ENCODE measurements at regions of chr1 and their contacts with region 1.

Region 1: GRCh38 chr1:221203224-221204054 is 324.2 kb downstream of the HLX start:
- DNase-seq: peak; percentile 74
- H3K4me3 ChIP-seq: no peak overlapping the region
- H3K27ac ChIP-seq: peak overlapping the region in 3 of 4 donors; percentile 35 to 42 (median 39)
- H3K4me1 ChIP-seq: no peaks in the 10 kb centered on the region
- H3K27me3 ChIP-seq: no peaks in the 10 kb centered on the region
- CTCF ChIP-seq: peak; percentile 67 to 91 (median 82)
- EP300 ChIP-seq: no peak
- POLR2A ChIP-seq: no peak

Region 2: GRCh38 chr1:220908757-220909156 is 294.7 kb before region 1 on chr1:
- in situ Hi-C with region 1: loop called in 1 of 4 experiments (anchors 25 kb)
- intact Hi-C with region 1: no loop called
- DNase-seq: no peak
- H3K4me3 ChIP-seq: no peak overlapping the region
- H3K27ac ChIP-seq: no peak overlapping the region
- H3K4me1 ChIP-seq: no peaks in the 10 kb centered on the region
- H3K27me3 ChIP-seq: peaks cover 1% of the 10 kb centered on the region
- CTCF ChIP-seq: peak in 2 of 5 experiments; percentile 28 to 30
- EP300 ChIP-seq: no peak
- POLR2A ChIP-seq: no peak

Region 3: DNA sequence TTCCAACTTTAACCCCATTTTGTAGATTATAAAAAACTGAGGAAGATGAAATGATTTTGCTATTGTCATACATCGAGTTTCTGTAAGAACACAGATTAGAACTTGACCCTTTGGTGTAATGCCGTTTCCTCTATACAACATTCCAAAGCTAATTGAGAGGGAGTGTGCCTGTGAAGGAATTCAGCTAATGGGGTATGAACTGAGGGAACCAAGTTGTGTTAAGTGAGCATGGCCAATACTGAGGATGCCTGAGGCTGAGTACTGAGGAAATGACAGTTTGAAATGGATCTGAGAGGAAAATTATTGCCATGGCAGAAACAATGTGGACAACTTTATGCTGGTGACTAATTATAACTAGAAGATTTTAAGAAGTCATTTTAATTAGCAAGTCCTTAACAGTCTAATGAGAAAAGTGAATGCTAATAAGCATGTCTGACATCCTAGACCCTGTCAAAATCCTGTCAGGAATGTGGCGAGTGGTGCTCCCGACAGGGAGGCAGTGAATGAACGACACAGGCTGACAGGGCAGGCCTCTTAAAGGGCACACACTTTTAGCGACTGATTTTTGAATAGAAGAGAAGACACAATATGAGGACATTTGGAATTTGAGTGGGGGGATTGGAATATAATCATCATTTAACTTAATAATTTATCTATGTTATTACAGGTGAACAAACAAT is 61.7 kb before region 1 on chr1:
- in situ Hi-C with region 1: no loop called
- intact Hi-C with region 1: no loop called
- DNase-seq: no peak
- H3K4me3 ChIP-seq: no peak overlapping the region
- H3K27ac ChIP-seq: no peak overlapping the region
- H3K4me1 ChIP-seq: no peaks in the 10 kb centered on the region
- H3K27me3 ChIP-seq: no peaks in the 10 kb centered on the region
- CTCF ChIP-seq: no peak
- EP300 ChIP-seq: no peak
- POLR2A ChIP-seq: no peak

Region 4: GRCh38 chr1:221180704-221181368 is 22.6 kb before region 1 on chr1:
- in situ Hi-C with region 1: no loop called
- intact Hi-C with region 1: loop called (anchors 1 kb)
- DNase-seq: no peak
- H3K4me3 ChIP-seq: no peak overlapping the region
- H3K27ac ChIP-seq: no peak overlapping the region
- H3K4me1 ChIP-seq: no peaks in the 10 kb centered on the region
- H3K27me3 ChIP-seq: no peaks in the 10 kb centered on the region
- CTCF ChIP-seq: no peak
- EP300 ChIP-seq: no peak
- POLR2A ChIP-seq: no peak